Naive thymus-derived CD4-positive, alpha-beta T cell (primary cell): ENCODE measurements at regions of chr1 and their contacts with region 1.

Region 1: DNA sequence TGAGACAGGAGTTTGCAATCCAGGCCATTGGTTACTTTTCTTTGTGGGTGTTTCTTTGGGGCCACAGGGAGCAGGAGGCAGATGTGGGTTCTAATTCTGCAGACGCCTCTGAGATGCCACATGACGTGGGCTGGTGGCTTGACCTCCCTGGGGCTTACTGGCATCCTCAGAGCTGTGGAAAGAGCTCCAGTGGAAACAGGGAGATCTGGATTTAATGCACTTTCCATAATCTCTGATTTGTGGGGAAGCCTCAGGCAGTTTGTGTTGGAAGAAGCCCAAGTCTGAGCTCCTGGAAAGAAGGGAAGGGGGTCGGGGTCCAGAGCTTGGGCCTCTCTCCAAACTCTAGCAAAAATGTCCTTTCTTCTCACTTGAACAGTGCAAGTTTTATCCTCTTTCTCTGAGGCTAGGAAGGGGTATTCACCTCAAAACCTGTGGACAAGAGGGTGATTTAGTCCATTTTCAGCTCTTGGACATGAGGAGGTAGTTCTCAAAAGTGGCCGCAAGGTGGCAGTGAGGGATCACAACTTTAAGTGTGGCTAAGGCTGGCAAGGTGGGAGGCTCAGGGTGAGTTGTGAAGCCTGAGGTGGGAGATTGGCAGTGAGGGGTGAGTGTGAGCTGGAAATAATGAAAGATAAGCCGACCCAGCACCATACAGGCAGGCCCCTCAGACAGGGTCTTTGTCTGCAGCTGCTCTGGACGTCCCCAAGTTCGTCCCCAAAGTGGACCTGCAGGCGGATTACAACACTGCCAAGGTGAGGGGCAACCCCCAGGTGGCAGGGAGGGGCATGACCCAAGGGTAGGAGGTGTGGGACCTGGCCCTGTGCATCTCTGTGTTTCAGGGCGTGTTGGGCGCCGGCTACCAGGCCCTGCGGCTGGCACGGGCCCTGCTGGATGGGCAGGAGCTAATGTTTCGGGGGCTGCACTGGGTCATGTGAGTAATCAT is 9.2 kb downstream of the IKBKE start:
- DNase-seq: peak in 8 of 9 donors; percentile 43 to 65 (median 56)
- ATAC-seq: peak; percentile 84
- H3K4me3 ChIP-seq: no peak overlapping the region
- H3K4me3 Mint-ChIP-seq: no peak overlapping the region
- H3K27ac ChIP-seq: no peak overlapping the region
- H3K27ac Mint-ChIP-seq: peak overlapping the region; percentile 20 to 85 (median 66)
- H3K4me1 ChIP-seq: peaks cover 0 to 11% of the 10 kb centered on the region in 2 donors
- H3K4me1 Mint-ChIP-seq: peaks cover 8 to 24% (median 17%) of the 10 kb centered on the region in 7 donors
- H3K27me3 ChIP-seq: no peaks in the 10 kb centered on the region
- H3K27me3 Mint-ChIP-seq: no peaks in the 10 kb centered on the region

Region 2: GRCh38 chr1:206461602-206462455 is 17.6 kb before region 1 on chr1:
- CTCF ChIA-PET with region 1: interaction called, 77 read pairs
- POLR2A ChIA-PET with region 1: interaction called, 6 read pairs
- intact Hi-C with region 1: loop called (anchors 1 kb)
- DNase-seq: peak in 8 of 9 donors; percentile 59 to 72 (median 66)
- ATAC-seq: peak; percentile 84
- H3K4me3 ChIP-seq: no peak overlapping the region
- H3K4me3 Mint-ChIP-seq: peak overlapping the region in 1 of 10 donors; percentile 38
- H3K27ac ChIP-seq: no peak overlapping the region
- H3K27ac Mint-ChIP-seq: peak overlapping the region in 1 of 9 donors; percentile 38
- H3K4me1 ChIP-seq: peaks cover 10 to 16% of the 10 kb centered on the region in 2 donors
- H3K4me1 Mint-ChIP-seq: peaks cover 20 to 48% (median 31%) of the 10 kb centered on the region in 7 donors
- H3K27me3 ChIP-seq: no peaks in the 10 kb centered on the region
- H3K27me3 Mint-ChIP-seq: no peaks in the 10 kb centered on the region